ENCODE measurements at regions of chr10 and their contacts with region 1.

Region 1: GRCh38 chr10:126904819-126905686 is at the start of gene DOCK1:
- DNase-seq: peak; percentile 71 to 78
- H3K4me3 ChIP-seq: peak within 1 kb of the TSS; percentile 86 to 99
- H3K27ac ChIP-seq: peak within 1 kb of the TSS; percentile 85 to 86
- H3K4me1 ChIP-seq: peaks cover 0 to 24% (median 18%) of the 10 kb centered on the region in 4 donors
- H3K27me3 ChIP-seq: no peaks in the 10 kb centered on the region
- CTCF ChIP-seq: no peak

Region 2: GRCh38 chr10:127398117-127398970 is 493.3 kb after region 1 on chr10:
- intact Hi-C with region 1: loop called (anchors 10 kb)
- DNase-seq: no peak
- H3K4me3 ChIP-seq: no peak overlapping the region
- H3K27ac ChIP-seq: no peak overlapping the region
- H3K4me1 ChIP-seq: peaks cover 0 to 12% (median 3%) of the 10 kb centered on the region in 4 donors
- H3K27me3 ChIP-seq: no peaks in the 10 kb centered on the region
- CTCF ChIP-seq: no peak

Region 3: DNA sequence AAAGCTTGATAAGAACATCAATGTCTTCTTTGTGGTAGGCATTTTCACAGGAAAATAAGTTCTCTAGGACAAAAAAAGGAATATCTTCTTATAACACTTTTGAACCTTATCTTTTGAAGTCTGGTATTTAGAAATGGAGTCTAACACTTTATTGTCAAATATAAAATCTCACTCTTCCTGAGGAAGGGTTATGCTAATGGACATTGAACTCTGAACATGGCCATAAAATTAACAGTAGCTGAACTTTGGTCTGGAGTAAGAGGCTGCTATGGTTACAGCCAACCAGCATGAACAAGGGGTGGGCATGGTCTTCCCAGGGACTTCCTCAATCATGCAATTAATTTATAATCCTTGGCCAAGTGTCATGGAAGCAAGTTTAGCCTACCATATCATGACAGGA is 987.7 kb after region 1 on chr10 and contains the start of gene CLRN3:
- intact Hi-C with region 1: no loop called
- DNase-seq: no peak
- H3K4me3 ChIP-seq: no peak within 1 kb of the TSS
- H3K27ac ChIP-seq: no peak within 1 kb of the TSS
- H3K4me1 ChIP-seq: peaks cover 0 to 7% (median 3%) of the 10 kb centered on the region in 4 donors
- H3K27me3 ChIP-seq: no peaks in the 10 kb centered on the region
- CTCF ChIP-seq: no peak